Activated T-helper 1 cell treated with anti-CD3 and anti-CD28 coated beads, Interleukin-12 subunit alpha, Interleukin-12 subunit beta, Interleukin-2, Interleukin-4 antibody, amounts not matched to agents 30 ng/mL and 10 ng/mL and 1 ng/mL, durations not matched to agents 14 hours and 24 hours and 36 hours (primary cell): ENCODE measurements at regions of chr5 and their contacts with region 1.

Region 1: DNA sequence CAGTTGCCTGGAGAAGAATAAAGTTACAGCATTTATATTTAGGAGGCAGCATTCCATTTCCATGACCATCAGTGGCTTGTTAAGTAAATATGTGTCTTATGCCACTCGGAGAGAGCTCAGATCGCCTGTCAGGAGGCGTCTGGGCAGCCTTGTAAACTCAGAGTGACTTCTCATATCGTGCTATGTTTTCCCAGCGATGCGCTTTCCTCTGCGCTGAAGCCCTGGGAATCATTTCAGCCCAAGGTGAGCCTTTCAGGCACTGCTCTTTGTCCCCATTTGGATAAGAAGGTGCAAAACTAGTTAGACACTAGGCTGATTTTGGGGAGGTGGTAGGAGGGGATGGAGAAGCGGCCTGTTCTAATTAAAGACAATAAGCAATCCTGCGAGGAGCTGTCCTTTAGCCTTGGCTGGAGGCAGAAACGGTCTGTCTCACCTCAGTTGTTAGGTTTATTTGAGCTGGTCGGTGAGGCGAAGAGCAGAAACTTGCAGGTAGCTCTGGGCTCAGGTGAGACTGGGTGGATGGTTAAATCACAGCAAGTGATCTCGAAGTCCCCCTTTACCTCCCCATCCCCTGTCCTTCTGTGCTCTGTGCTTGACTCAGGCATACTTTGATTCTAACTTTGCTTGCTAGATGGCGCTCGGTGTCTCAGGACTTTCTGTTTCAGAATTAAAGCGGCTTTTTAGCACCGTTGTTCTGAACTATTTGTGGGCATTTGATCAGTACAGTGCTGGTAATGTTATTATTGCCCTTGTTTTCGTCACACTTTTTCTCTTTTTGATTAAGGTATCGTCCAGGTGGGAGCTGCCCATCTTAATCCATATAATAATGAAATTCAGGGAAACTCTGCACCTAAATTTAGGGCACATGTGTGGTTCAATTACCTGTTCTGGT is 24.6 kb downstream of the NR2F1 start:
- DNase-seq: no peak
- H3K4me3 Mint-ChIP-seq: no peak overlapping the region
- H3K27ac Mint-ChIP-seq: no peak overlapping the region
- H3K4me1 Mint-ChIP-seq: peaks cover 10% of the 10 kb centered on the region
- H3K27me3 Mint-ChIP-seq: peaks cover 85% of the 10 kb centered on the region

Region 2: DNA sequence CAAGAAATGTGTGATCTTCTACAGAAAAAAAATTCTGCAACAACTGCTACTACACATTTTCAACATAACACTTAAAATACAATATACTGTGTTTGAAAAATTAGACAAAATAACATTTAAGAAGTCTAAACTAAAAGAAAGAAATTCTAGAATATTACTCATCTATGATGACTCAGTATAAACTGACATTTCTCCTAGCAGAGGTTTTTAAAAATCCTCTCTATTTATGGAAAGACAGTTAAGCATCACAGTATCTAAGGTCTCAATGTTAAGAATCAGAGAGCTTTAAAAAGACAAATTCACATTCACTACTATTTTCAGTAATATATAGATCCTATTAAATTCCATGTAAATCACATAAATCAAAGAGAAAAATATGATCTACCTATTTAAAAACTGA is 87.9 kb before region 1 on chr5:
- intact Hi-C with region 1: no loop called
- DNase-seq: no peak
- H3K4me3 Mint-ChIP-seq: no peak overlapping the region
- H3K27ac Mint-ChIP-seq: no peak overlapping the region
- H3K4me1 Mint-ChIP-seq: no peaks in the 10 kb centered on the region
- H3K27me3 Mint-ChIP-seq: no peaks in the 10 kb centered on the region

Region 3: DNA sequence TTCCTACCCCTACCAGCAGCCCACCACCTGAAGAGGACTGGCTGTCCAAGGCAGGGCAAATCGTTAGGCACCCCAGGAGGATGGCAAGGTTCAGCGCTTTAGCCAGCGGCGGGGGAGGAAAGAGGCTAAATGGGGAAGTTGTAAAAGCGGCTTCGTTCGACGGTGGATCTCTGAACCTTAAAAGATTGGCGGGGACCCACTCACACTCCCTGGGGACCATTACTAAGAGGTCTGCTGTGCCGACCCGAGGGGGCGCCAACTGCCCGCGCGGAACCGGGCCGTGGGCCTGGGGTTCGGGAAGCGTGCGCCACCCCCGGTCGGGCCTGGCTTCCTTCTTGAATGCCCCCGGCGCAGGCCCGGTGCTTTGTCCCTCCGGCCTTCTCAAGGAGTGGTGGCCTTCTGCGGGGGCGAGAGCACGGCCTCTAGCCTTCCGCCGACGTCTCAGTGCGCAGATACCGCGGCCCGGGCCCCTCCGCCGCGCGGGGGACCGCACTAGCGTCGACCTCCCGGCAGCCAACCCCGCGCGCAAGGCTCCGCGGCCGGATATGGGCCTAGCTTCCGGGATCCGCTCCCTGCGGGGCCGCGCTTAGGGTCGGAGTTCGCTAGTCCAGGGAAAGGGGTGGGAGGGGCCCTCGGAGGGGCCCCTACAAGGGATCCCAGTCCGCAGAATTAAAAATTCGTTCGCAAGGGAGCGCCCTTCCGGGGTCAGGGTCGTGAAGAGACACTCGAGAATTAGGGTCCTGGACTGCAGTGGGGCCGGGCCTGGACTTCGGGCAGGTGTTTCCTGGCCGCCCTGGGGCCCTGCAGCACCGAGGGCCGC is 37.1 kb before region 1 on chr5:
- intact Hi-C with region 1: loop called (anchors 5 kb)
- DNase-seq: no peak
- H3K4me3 Mint-ChIP-seq: no peak overlapping the region
- H3K27ac Mint-ChIP-seq: no peak overlapping the region
- H3K4me1 Mint-ChIP-seq: no peaks in the 10 kb centered on the region
- H3K27me3 Mint-ChIP-seq: peaks cover 74% of the 10 kb centered on the region

Region 4: GRCh38 chr5:93582677-93583438 is 24.8 kb before region 1 on chr5 and contains the start of gene NR2F1:
- intact Hi-C with region 1: loop called (anchors 2 kb)
- DNase-seq: no peak
- H3K4me3 Mint-ChIP-seq: no peak within 1 kb of the TSS
- H3K27ac Mint-ChIP-seq: peak within 1 kb of the TSS; percentile 76
- H3K4me1 Mint-ChIP-seq: peaks cover 19% of the 10 kb centered on the region
- H3K27me3 Mint-ChIP-seq: peaks cover 53% of the 10 kb centered on the region
- total RNA-seq, gene NR2F1: not detected in 2 replicates

Region 5: DNA sequence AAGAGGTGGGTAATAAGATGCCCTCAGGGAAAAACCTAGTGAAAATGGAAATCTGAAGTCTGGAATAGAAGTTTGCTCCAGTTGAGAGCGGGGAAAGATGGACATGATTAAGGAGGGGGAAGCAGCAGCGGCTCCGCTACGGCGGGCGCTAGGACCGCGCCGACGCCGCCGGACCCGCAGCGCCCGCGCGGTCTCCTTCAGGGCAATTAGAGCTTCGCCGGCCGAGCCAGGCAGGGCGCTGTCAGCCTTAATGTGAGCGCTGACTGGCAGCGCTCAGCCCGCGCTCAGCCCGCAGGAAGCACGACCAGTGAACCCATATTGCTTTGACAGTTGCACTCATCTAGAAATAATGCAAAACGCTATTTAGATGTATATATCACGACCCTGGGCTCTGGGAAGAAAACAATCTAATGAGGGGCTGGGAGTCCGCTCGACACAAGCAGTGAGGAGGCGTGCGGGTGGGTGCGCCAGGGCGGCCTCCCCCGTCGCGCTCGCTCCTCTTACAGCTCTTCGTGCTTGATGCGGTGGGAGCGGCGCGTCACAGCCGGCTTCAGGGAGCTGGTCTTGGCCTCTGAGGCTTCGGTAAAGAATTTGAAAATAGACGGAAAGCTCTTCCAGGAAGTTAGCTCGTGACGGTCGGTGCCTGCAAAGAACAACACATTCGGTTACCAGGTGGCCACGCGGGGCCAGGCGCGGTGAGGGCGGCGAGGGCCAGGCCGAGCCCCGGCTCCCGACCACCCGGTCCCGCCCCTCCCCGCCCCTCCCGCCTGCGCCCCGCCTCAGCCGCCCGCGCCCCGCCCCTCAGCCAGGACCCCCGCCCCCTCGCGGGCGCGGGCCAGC is 13.1 kb after region 1 on chr5:
- intact Hi-C with region 1: loop called (anchors 1 kb)
- DNase-seq: peak; percentile 25
- H3K4me3 Mint-ChIP-seq: peak overlapping the region; percentile 90
- H3K27ac Mint-ChIP-seq: peak overlapping the region; percentile 29
- H3K4me1 Mint-ChIP-seq: peaks cover 10% of the 10 kb centered on the region
- H3K27me3 Mint-ChIP-seq: peaks cover 44% of the 10 kb centered on the region

Region 6: DNA sequence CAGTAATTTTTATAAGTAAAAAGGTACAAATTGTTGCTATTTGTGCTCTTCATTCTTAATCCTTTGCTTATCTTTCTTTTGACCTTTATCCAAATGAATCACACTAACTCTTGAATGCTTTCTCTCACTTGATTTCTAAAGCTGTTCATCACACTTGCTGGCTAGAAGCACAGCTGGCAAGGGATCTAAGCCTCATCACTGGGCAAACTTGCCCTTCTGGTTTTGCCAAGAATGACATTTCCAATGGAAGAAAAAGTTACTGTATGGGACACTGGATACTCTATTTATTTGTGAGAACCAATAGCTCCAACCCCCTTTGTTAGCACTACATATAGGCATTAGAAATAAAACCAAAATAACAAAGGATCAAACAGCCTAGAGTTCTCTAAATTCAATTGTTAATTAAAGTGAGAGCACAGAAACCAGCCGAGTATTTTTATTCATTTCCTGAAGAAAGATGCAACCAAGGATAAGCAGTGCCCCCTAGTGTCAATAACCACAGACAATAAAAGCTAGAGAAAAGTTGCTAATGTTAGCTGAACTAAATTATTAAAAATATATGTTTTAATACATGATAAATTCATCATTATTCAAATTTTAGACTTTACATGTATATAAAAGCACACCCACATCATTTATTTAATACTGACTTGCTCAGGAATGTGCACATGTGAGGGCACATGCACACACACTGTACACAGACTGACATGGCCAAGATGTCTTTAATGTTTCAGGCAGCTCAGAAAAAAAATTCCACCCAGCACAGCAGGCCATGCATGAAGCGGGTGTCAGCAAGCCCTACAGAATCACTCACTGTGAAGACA is 193.6 kb after region 1 on chr5:
- intact Hi-C with region 1: loop called (anchors 1 kb)
- DNase-seq: no peak
- H3K4me3 Mint-ChIP-seq: no peak overlapping the region
- H3K27ac Mint-ChIP-seq: no peak overlapping the region
- H3K4me1 Mint-ChIP-seq: peaks cover 4% of the 10 kb centered on the region
- H3K27me3 Mint-ChIP-seq: peaks cover 2% of the 10 kb centered on the region

Region 7: GRCh38 chr5:93915142-93915553 is 307.5 kb after region 1 on chr5:
- intact Hi-C with region 1: loop called (anchors 1 kb)
- DNase-seq: no peak
- H3K4me3 Mint-ChIP-seq: no peak overlapping the region
- H3K27ac Mint-ChIP-seq: no peak overlapping the region
- H3K4me1 Mint-ChIP-seq: no peaks in the 10 kb centered on the region
- H3K27me3 Mint-ChIP-seq: no peaks in the 10 kb centered on the region

Region 8: DNA sequence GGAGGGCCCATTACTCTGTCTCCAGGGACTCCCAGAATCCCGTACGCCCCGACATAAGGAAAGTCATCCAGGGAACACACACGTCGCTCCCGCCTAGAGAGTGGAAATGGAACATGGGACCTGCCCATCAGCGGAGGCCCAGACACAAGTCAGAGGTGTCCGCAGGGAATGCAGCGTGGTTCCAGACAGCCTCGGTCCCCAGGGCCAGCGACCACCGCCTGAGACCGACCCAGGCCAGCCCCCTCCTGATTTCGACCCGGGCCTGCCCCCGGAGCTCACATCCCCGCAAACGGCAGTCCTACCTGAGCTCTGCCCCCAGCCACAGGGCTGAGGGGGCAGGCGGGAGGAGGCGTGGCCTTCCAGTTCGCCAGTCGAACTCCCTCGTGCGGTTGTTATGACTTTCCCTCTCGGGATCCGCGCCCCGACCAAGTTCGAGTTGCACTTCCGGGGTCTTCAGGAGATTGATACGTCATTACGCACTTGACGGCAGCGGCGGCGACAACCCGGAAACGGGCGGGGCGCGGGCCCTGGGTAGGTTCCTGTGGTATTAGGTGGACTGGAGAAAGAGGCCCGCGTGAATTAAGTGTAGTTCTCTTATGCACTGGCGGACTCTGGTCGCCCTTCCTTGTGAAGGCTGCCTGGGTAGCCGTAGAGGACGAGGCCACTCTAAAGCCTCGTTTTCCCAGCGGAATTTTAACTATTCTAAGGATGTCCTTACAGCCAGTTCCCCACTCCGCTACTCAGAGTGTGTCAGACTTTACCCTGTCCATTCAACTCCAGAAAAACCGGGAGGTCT is 503.8 kb after region 1 on chr5:
- intact Hi-C with region 1: loop called (anchors 10 kb)
- DNase-seq: peak; percentile 88
- H3K4me3 Mint-ChIP-seq: peak overlapping the region; percentile 93
- H3K27ac Mint-ChIP-seq: peak overlapping the region; percentile 89
- H3K4me1 Mint-ChIP-seq: peaks cover 31% of the 10 kb centered on the region
- H3K27me3 Mint-ChIP-seq: peaks cover 3% of the 10 kb centered on the region